ENCODE measurements at regions of chr7 and their contacts with region 1.

Region 1: DNA sequence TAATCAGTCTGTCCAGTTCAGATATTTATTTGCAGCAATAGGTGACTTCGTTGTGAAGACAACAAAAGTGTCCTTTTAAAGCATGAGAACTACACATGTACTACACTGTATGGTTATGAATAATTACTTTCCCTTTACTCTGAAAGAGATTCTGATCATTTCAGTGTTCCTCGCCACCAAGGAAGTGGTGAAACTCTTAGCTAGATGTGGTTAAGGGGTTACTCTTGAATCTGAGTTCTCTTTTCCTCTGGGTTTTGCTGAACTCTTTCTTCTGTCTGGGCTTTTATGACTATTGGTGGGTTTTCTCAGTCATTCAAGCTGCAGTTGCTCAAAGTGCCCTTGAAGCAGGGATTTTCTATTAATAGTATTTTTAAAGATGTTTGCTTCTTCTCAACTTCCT is 127.9 kb upstream of the SEM1 start:
- DNase-seq: peak; percentile 54
- H3K4me3 Mint-ChIP-seq: no peak overlapping the region
- H3K27ac Mint-ChIP-seq: no peak overlapping the region
- H3K4me1 Mint-ChIP-seq: peaks cover 36% of the 10 kb centered on the region
- H3K27me3 Mint-ChIP-seq: peaks cover 39% of the 10 kb centered on the region

Region 2: DNA sequence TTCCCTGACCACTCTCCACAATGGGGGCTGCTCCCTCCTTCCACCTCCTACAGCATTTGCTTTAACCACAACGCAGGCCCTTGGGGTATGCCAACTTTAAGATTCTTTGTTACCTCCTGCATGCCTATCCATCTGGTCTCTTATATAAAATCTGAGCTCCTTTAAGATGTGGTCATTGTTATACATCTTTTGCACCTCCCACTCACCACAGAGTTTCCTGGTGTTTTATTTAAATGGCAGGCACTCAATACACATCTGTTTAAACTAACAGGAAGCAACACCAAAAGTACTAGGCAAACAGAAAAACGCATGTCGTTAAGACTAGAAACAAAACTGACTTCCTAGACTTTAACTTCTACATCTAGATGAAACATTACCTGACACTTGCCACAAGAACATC is 552.0 kb before region 1 on chr7:
- CTCF ChIA-PET with region 1: no interaction called
- intact Hi-C with region 1: loop called (anchors 1 kb)
- DNase-seq: peak; percentile 39
- H3K4me3 Mint-ChIP-seq: no peak overlapping the region
- H3K27ac Mint-ChIP-seq: peak overlapping the region; percentile 79
- H3K4me1 Mint-ChIP-seq: peaks cover 38% of the 10 kb centered on the region
- H3K27me3 Mint-ChIP-seq: no peaks in the 10 kb centered on the region

Region 3: GRCh38 chr7:96321658-96322372 is 515.8 kb before region 1 on chr7 and contains the start of gene SLC25A13:
- CTCF ChIA-PET with region 1: no interaction called
- intact Hi-C with region 1: loop called (anchors 1 kb)
- DNase-seq: peak; percentile 53
- H3K4me3 Mint-ChIP-seq: peak within 1 kb of the TSS; percentile 83
- H3K27ac Mint-ChIP-seq: peak within 1 kb of the TSS; percentile 89
- H3K4me1 Mint-ChIP-seq: peaks cover 34% of the 10 kb centered on the region
- H3K27me3 Mint-ChIP-seq: peaks cover 6% of the 10 kb centered on the region
- total RNA-seq, gene SLC25A13: 4.0 to 5.7 TPM

Region 4: DNA sequence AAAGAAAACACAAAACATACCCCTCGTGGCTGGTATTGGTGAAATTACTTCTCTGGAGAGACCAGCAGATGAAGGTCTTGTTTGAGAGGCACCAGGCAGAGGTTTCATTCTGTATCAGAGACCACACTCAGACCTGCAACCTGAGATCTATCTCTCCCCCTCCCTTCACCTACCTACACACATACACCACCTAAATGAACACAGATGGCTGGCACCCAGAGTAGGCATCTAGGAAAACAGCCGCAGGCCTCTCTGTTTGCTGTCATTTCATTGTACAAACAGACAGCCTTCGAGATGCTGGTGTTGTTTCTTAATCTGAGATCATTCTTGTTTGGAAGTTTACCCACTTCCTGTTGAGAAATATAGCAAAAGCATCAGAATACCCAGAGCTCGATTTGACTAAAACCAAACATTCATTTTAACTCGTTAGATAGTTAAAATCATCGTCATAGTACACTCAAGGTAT is 341.8 kb before region 1 on chr7:
- CTCF ChIA-PET with region 1: no interaction called
- intact Hi-C with region 1: loop called (anchors 1 kb)
- DNase-seq: peak; percentile 49
- H3K4me3 Mint-ChIP-seq: no peak overlapping the region
- H3K27ac Mint-ChIP-seq: peak overlapping the region; percentile 7
- H3K4me1 Mint-ChIP-seq: peaks cover 9% of the 10 kb centered on the region
- H3K27me3 Mint-ChIP-seq: peaks cover 2% of the 10 kb centered on the region

Region 5: GRCh38 chr7:96747418-96747940 is 90.1 kb before region 1 on chr7:
- CTCF ChIA-PET with region 1: no interaction called
- intact Hi-C with region 1: no loop called
- DNase-seq: no peak
- H3K4me3 Mint-ChIP-seq: no peak overlapping the region
- H3K27ac Mint-ChIP-seq: no peak overlapping the region
- H3K4me1 Mint-ChIP-seq: no peaks in the 10 kb centered on the region
- H3K27me3 Mint-ChIP-seq: peaks cover 11% of the 10 kb centered on the region

Region 6: DNA sequence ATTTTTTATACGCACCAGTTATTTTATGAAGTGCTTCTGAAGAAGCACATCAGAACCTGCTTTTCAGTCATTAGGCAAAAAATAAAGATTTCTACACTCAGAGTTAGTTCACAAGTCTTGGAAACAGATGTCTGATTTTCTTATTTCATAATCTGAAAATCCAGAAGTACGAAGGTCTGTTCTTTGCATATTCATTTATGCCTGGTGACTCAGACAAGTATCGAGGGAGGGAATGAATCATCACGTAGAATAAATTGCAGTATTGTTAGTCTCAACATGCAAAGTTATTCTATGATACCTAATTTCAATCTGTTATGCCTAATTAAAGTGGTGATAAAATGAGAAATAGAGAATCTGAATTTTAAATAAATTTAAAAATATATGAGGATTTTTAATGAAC is 14.3 kb before region 1 on chr7:
- CTCF ChIA-PET with region 1: no interaction called
- intact Hi-C with region 1: loop called (anchors 1 kb)
- DNase-seq: peak; percentile 16
- H3K4me3 Mint-ChIP-seq: no peak overlapping the region
- H3K27ac Mint-ChIP-seq: no peak overlapping the region
- H3K4me1 Mint-ChIP-seq: peaks cover 3% of the 10 kb centered on the region
- H3K27me3 Mint-ChIP-seq: peaks cover 48% of the 10 kb centered on the region

Region 7: DNA sequence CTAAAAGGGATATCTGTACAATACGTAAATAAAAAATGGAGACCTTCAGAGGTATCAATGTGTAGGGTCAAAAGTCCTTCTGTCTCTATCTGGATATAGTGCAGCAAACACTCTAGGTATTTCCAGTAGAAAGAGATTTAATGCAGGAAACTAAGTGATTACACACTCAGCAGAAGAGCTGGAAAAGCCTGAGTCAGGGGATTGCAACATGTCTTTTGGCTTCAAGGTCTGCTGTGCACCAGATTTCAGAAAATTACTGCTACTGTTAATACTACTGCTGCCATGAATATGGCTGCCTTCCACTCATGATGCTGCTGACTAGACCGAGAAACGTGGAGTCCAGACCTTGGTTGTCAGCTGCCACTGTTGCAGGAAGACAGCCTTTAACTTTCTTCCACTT is 72.9 kb after region 1 on chr7:
- CTCF ChIA-PET with region 1: no interaction called
- intact Hi-C with region 1: no loop called
- DNase-seq: no peak
- H3K4me3 Mint-ChIP-seq: no peak overlapping the region
- H3K27ac Mint-ChIP-seq: no peak overlapping the region
- H3K4me1 Mint-ChIP-seq: no peaks in the 10 kb centered on the region
- H3K27me3 Mint-ChIP-seq: peaks cover 22% of the 10 kb centered on the region

Region 8: DNA sequence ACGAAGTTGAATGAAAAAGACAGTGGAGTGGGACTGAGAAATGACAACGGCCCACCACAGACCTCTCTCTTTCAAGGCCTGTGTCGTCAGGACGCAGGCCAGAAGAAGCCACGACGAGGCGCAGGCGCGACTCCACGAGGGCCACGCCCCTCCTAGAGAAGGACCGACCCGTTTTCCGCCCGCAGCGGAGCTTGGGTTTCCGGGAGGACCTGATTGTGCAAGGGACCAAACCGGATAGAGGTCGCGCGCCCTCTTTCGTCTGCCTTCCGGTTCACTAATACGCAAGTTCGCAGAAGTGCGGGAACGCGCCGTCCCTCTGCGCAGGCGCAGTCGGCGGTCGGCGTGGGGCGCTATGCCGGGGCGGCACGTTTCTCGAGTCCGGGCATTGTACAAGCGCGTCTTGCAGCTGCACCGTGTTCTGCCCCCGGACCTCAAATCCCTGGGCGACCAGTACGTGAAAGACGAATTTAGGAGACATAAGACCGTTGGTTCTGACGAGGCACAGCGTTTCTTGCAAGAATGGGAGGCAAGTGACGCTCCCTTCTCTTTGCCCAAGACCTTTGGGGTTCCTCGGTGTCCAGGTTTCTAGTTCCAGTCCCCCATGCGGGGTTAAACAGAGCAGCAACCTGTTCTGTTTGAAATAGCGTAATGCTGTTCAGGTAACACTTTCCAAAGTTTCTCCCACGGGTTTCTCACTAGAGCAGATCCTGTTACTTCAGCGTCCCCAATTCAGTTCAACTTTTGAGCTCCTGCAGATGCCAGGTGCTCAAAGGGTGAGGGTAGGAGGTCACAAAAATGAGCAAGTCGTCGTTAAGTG is 280.0 kb after region 1 on chr7 and contains the start of gene SDHAF3:
- CTCF ChIA-PET with region 1: no interaction called
- intact Hi-C with region 1: loop called (anchors 2 kb)
- DNase-seq: peak; percentile 99
- H3K4me3 Mint-ChIP-seq: peak within 1 kb of the TSS; percentile 89
- H3K27ac Mint-ChIP-seq: peak within 1 kb of the TSS; percentile 92
- H3K4me1 Mint-ChIP-seq: peaks cover 39% of the 10 kb centered on the region
- H3K27me3 Mint-ChIP-seq: no peaks in the 10 kb centered on the region
- total RNA-seq, gene SDHAF3: 30.7 to 36.3 TPM